ENCODE measurements at regions of chr11 and their contacts with region 1.

Region 1: GRCh38 chr11:83241291-83241946 is 44.7 kb downstream of the CCDC90B start:
- H3K4me3 Mint-ChIP-seq: no peak overlapping the region
- H3K27ac Mint-ChIP-seq: no peak overlapping the region
- H3K4me1 Mint-ChIP-seq: no peaks in the 10 kb centered on the region
- H3K27me3 Mint-ChIP-seq: no peaks in the 10 kb centered on the region

Region 2: GRCh38 chr11:83063073-83063754 is 178.2 kb before region 1 on chr11:
- intact Hi-C with region 1: no loop called
- H3K4me3 Mint-ChIP-seq: peak overlapping the region; percentile 51
- H3K27ac Mint-ChIP-seq: peak overlapping the region; percentile 80
- H3K4me1 Mint-ChIP-seq: peaks cover 64% of the 10 kb centered on the region
- H3K27me3 Mint-ChIP-seq: peaks cover 11% of the 10 kb centered on the region

Region 3: DNA sequence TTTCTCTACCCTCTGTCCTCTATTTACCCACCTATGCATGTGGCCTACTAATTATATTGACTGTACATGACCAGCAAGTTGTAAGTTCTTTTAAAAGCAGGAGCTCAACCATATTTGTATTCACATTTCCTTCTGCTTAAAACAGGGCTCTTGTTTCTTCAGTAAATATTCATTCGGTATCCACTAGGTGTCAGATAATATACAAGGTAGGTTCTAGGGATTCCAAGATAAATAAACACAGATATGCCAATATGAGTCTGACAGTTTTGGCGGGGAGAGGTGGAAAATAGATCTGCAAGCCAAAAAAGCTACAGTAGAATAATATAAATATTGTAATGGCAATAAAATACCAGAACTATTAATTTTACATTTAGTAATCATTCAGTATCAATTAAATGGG is 154.4 kb before region 1 on chr11:
- intact Hi-C with region 1: loop called (anchors 10 kb)
- H3K4me3 Mint-ChIP-seq: no peak overlapping the region
- H3K27ac Mint-ChIP-seq: no peak overlapping the region
- H3K4me1 Mint-ChIP-seq: peaks cover 6% of the 10 kb centered on the region
- H3K27me3 Mint-ChIP-seq: peaks cover 3% of the 10 kb centered on the region

Measured in dendritic cell treated with granulocyte-macrophage colony-stimulating factor and Interleukin-4, amounts not matched to agents 40 ng/mL and 50 ng/mL, for 4 days (primary cell).